Sigmoid colon (tissue), 7 donors: ENCODE measurements at regions of chr5 and their contacts with region 1.

Region 1: DNA sequence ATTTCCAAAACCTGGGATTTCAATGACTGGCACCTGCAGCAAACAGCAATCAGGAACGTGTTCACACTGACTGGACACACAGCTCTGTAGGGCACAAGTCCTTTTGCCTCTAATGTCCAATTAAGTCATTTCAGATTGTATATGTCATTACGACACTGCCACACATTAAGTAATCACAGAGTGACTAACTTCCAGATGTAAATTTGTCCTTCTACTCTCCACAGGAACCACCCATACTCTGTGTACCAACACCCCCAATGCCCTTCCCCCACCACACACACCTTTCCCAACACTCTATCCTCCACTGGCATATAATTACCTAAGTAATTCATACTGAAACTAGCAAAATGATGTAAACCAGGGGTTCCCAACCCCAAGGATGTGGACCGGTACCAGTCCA is 30.5 kb downstream of the LARS1 start:
- DNase-seq: no peak
- H3K4me3 ChIP-seq: no peak overlapping the region
- H3K27ac ChIP-seq: no peak overlapping the region
- H3K4me1 ChIP-seq: no peaks in the 10 kb centered on the region
- H3K27me3 ChIP-seq: no peaks in the 10 kb centered on the region
- CTCF ChIP-seq: no peak
- EP300 ChIP-seq: no peak
- POLR2A ChIP-seq: no peak

Region 2: GRCh38 chr5:146273109-146273508 is 121.1 kb after region 1 on chr5:
- intact Hi-C with region 1: loop called (anchors 10 kb)
- DNase-seq: no peak
- H3K4me3 ChIP-seq: no peak overlapping the region
- H3K27ac ChIP-seq: no peak overlapping the region
- H3K4me1 ChIP-seq: no peaks in the 10 kb centered on the region
- H3K27me3 ChIP-seq: no peaks in the 10 kb centered on the region
- CTCF ChIP-seq: no peak
- EP300 ChIP-seq: no peak
- POLR2A ChIP-seq: no peak